ENCODE measurements at regions of chr5 and their contacts with region 1.

Region 1: DNA sequence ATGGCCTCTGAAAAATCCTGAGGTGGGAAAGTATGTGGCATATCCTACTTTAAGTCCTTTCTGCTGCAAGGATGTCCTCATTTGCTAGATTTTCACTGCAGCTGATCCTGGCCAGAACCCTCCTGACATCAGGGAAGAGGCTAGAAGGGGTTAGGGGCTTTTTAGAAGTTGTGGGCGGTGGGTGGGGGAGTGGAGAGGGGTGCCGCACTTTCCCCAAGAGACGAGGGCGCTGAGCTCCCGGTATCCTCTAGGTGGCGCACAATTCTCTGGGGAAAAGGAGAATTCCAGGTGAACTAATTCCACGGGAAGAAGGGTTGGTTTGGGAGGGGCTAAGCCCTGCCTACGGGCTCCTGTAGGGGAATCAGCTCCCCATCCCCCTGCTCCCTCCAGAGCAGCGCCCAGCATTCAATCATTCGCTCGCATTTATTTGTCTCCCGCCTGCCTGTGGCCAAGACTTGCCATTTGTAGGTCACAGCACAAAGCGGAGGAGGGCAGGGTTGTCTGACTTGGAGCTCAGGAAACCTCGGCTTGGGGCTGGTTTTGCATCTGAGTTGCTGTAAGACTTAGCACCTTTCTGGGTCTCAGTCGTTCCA is 42.9 kb upstream of the HAND1 start:
- DNase-seq: peak; percentile 91
- ATAC-seq: peak; percentile 95
- H3K4me3 Mint-ChIP-seq: peak overlapping the region; percentile 77
- H3K27ac Mint-ChIP-seq: peak overlapping the region; percentile 92
- H3K4me1 Mint-ChIP-seq: peaks cover 22% of the 10 kb centered on the region
- H3K27me3 Mint-ChIP-seq: peaks cover 32% of the 10 kb centered on the region
- CTCF ChIP-seq: peak; percentile 79

Region 2: GRCh38 chr5:154430466-154430865 is 90.5 kb before region 1 on chr5:
- CTCF ChIA-PET with region 1: no interaction called
- POLR2A ChIA-PET with region 1: no interaction called
- DNase-seq: no peak
- ATAC-seq: no peak
- H3K4me3 Mint-ChIP-seq: no peak overlapping the region
- H3K27ac Mint-ChIP-seq: no peak overlapping the region
- H3K4me1 Mint-ChIP-seq: no peaks in the 10 kb centered on the region
- H3K27me3 Mint-ChIP-seq: no peaks in the 10 kb centered on the region
- CTCF ChIP-seq: no peak

Region 3: DNA sequence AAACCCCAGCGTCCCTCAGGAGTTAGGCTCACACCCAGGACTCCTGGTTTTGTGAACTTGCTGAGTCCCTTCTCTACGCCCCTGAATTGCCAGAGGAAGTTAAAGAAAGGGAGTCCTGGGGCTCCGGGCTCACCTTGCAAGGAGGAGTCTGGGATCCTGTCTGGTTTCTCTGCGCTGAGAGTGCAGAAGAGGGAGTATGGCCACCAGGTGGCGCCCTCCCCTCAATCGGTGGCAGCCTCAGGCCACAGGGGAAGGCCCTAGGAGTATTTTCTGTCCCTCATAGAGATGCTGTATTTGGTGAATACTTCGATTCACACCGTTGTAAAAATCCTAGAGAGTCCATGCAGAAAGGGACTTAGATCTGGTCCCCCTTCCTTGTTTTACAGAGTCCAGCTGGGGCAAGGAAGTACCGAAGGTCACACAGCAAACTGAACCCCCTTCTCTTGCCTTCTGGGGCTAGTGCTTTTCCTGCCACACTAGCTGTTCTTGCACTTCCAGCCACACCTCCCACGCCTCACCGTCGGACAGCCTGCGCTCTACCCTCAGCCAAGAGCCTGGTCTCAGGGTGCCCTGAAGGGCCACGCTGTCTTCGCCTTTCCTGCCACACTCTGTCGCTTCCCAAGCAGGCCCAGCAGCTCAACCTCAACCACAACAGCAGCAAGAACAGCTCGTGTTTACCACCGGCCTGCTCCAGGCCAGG is 53.2 kb before region 1 on chr5:
- CTCF ChIA-PET with region 1: interaction called, 31 read pairs
- POLR2A ChIA-PET with region 1: no interaction called
- DNase-seq: peak; percentile 90
- ATAC-seq: peak; percentile 96
- H3K4me3 Mint-ChIP-seq: 0 out of 2 replicates have a peak overlapping the region, but pooled peaks have one; percentile 9
- H3K27ac Mint-ChIP-seq: no peak overlapping the region
- H3K4me1 Mint-ChIP-seq: peaks cover 17% of the 10 kb centered on the region
- H3K27me3 Mint-ChIP-seq: peaks cover 70% of the 10 kb centered on the region
- CTCF ChIP-seq: peak; percentile 90

Region 4: GRCh38 chr5:154505611-154506010 is 15.3 kb before region 1 on chr5:
- CTCF ChIA-PET with region 1: interaction called, 51 read pairs
- POLR2A ChIA-PET with region 1: interaction called, 5 read pairs
- DNase-seq: peak; percentile 36
- ATAC-seq: peak; percentile 72
- H3K4me3 Mint-ChIP-seq: no peak overlapping the region
- H3K27ac Mint-ChIP-seq: no peak overlapping the region
- H3K4me1 Mint-ChIP-seq: peaks cover 24% of the 10 kb centered on the region
- H3K27me3 Mint-ChIP-seq: peaks cover 3% of the 10 kb centered on the region
- CTCF ChIP-seq: no peak

Region 5: GRCh38 chr5:154568589-154568988 is 47.6 kb after region 1 on chr5:
- CTCF ChIA-PET with region 1: interaction called, 23 read pairs
- POLR2A ChIA-PET with region 1: no interaction called
- DNase-seq: no peak
- ATAC-seq: no peak
- H3K4me3 Mint-ChIP-seq: no peak overlapping the region
- H3K27ac Mint-ChIP-seq: no peak overlapping the region
- H3K4me1 Mint-ChIP-seq: peaks cover 13% of the 10 kb centered on the region
- H3K27me3 Mint-ChIP-seq: no peaks in the 10 kb centered on the region
- CTCF ChIP-seq: no peak

Region 6: GRCh38 chr5:154610321-154611154 is 89.6 kb after region 1 on chr5:
- CTCF ChIA-PET with region 1: interaction called, 82 read pairs
- POLR2A ChIA-PET with region 1: interaction called, 3 read pairs
- DNase-seq: peak; percentile 94
- ATAC-seq: peak; percentile 87
- H3K4me3 Mint-ChIP-seq: peak overlapping the region; percentile 65
- H3K27ac Mint-ChIP-seq: no peak overlapping the region
- H3K4me1 Mint-ChIP-seq: peaks cover 29% of the 10 kb centered on the region
- H3K27me3 Mint-ChIP-seq: peaks cover 79% of the 10 kb centered on the region
- CTCF ChIP-seq: peak; percentile 91

Region 7: GRCh38 chr5:154714266-154714986 is 193.5 kb after region 1 on chr5:
- CTCF ChIA-PET with region 1: no interaction called
- POLR2A ChIA-PET with region 1: no interaction called
- DNase-seq: no peak
- ATAC-seq: no peak
- H3K4me3 Mint-ChIP-seq: peak overlapping the region; percentile 65
- H3K27ac Mint-ChIP-seq: peak overlapping the region; percentile 77
- H3K4me1 Mint-ChIP-seq: peaks cover 60% of the 10 kb centered on the region
- H3K27me3 Mint-ChIP-seq: no peaks in the 10 kb centered on the region
- CTCF ChIP-seq: no peak